Cardiac septum (tissue), 1 donor: ENCODE measurements at regions of chr11 and their contacts with region 1.

Region 1: GRCh38 chr11:118907051-118908042 is 18.4 kb downstream of the BCL9L start:
- DNase-seq: peak; percentile 95

Region 2: DNA sequence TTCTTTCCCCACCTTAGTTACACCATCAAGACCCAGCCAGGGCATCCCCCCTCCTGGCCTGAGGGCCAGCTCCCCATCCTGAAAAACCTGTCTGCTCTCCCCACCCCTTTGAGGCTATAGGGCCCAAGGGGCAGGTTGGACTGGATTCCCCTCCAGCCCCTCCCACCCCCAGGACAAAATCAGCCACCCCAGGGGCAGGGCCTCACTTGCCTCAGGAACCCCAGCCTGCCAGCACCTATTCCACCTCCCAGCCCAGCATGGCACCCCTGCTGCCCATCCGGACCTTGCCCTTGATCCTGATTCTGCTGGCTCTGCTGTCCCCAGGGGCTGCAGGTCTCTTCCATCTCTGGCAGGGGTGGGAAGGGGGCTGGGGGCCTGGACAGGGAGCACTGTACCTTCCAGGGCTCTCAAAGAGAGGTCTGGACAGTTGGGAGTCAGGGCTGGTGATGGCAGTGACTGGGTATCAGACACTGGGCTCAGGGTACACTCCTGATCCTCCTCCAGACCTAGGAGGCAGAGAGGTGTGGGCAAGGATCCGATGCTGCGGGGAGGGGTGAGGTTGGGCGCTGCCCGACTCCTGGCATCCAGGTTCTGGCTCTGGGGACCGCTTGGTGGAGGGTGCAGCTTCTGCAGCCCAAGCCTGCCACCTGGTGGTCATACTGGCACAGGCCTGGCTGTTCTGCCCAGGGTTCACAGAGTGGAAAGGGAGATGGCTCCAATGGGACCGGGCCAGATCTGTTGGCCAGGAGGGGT is 48.9 kb after region 1 on chr11 and contains the start of gene UPK2:
- intact Hi-C with region 1: loop called (anchors 1 kb)
- DNase-seq: peak; percentile 94
- total RNA-seq, gene UPK2: not detected